IMR-90 (cell line): ENCODE measurements at regions of chr11 and their contacts with region 1.

Region 1: DNA sequence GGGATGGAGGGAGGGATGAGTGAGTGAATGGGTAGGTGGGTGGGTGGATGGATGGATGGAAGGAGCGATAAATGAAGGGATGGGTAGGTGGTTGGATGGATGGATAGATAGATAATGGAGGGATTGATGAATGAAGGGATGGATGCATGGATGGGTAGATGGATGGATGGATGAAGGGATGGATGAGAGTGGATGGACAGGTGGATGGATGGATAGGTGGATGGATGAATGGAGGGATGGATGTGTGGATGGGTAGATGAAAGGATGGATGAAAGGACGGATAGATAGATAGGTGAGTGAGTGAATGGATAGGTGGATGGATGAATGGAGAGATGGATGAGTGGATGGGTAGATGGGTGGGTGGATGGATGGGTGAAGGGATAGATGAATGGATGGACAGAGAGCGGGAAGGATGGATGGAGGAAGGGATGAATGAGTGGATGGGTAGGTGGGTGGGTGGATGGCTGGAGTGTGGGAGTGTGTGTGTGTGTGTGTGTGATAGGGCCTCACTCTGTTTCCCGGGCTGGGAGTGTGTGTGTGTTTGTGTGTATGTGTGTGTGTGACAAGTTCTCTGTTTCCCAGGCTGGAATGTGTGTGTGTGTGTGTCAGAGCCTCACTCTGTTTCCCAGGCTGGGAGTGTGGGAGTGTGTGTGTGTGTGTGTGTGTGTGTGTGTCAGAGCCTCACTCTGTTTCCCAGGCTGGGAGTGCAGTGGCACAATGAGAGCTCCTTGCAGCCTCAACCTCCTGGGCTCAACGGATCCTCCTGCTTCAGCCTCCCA is 2.1 kb upstream of the PRR33 start:
- DNase-seq: peak; percentile 12
- ATAC-seq: no peak
- H3K4me3 ChIP-seq: no peak overlapping the region
- H3K27ac ChIP-seq: no peak overlapping the region
- H3K4me1 ChIP-seq: no peaks in the 10 kb centered on the region
- H3K27me3 ChIP-seq: peaks cover 27% of the 10 kb centered on the region
- CTCF ChIP-seq: no peak
- POLR2A ChIP-seq: no peak
- RAD21 ChIP-seq: no peak

Region 2: DNA sequence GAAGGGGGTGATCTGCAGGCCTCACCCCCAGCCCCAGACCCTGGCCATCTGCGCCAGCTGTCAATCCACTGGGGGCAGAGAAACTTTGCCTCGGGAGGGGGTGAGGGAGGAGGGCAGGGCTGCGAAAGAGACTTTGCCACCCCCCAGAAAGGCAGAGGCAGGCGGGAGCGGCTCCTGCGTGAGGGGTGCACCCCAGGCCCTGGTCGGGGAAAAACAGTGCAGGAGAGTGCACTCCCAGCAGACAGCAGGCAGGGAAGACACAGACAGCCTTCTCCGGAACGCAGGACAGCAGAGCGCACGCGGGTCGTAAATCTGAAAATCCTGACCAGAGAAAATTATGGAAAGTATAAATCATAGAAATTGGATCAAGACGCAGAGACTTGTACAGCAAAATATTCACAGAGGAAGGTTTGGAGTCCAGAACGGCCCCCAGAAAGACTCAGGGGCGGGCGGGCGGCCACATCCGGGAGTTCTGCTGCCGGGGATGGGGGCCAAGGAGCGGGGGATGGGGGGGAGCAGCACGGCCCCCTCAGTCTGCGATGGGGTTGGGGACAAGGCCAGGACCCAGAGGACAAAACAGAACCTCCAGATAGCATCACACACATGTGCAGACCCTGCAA is 45.3 kb after region 1 on chr11:
- CTCF ChIA-PET with region 1: no interaction called
- POLR2A ChIA-PET with region 1: no interaction called
- dilution Hi-C with region 1: no loop called
- in situ Hi-C with region 1: no loop called
- intact Hi-C with region 1: loop called (anchors 1 kb)
- DNase-seq: no peak
- ATAC-seq: no peak
- H3K4me3 ChIP-seq: no peak overlapping the region
- H3K27ac ChIP-seq: no peak overlapping the region
- H3K4me1 ChIP-seq: no peaks in the 10 kb centered on the region
- H3K27me3 ChIP-seq: peaks cover 6% of the 10 kb centered on the region; the same call in 1 of the 2 replicates
- CTCF ChIP-seq: no peak
- POLR2A ChIP-seq: no peak
- RAD21 ChIP-seq: no peak

Region 3: GRCh38 chr11:2846056-2846455 is 952.3 kb after region 1 on chr11:
- CTCF ChIA-PET with region 1: no interaction called
- POLR2A ChIA-PET with region 1: no interaction called
- dilution Hi-C with region 1: no loop called
- in situ Hi-C with region 1: no loop called
- intact Hi-C with region 1: no loop called
- DNase-seq: peak; percentile 48
- ATAC-seq: peak; percentile 78
- H3K4me3 ChIP-seq: no peak overlapping the region
- H3K27ac ChIP-seq: no peak overlapping the region
- H3K4me1 ChIP-seq: no peaks in the 10 kb centered on the region
- H3K27me3 ChIP-seq: peaks cover 19% of the 10 kb centered on the region; the same call in 1 of the 2 replicates
- CTCF ChIP-seq: no peak
- POLR2A ChIP-seq: no peak
- RAD21 ChIP-seq: no peak